ENCODE measurements at regions of chr3 and their contacts with region 1.

Region 1: DNA sequence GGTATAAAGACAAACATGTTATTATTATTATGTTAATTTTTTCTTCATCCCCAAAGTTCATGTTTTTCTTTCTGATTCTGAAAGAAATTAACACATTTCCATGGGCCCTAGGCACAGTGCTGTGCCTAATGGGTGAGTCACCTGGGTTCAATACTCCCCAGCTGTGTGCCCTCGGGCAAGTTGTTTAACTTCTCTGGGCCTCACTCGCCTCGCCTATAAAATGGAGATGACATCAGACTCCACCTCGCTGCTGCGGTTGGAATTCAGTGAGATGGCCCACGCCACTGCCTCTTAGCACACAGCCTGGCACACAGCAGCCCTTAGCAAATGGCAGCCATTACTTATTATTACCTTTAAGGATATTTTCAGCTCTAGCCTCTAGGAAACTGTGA is 22.6 kb downstream of the DNASE1L3 start:
- DNase-seq: peak; percentile 86
- H3K4me3 Mint-ChIP-seq: no peak overlapping the region
- H3K27ac Mint-ChIP-seq: no peak overlapping the region
- H3K4me1 Mint-ChIP-seq: peaks cover 9% of the 10 kb centered on the region
- H3K27me3 Mint-ChIP-seq: no peaks in the 10 kb centered on the region
- CTCF ChIP-seq: no peak

Region 2: DNA sequence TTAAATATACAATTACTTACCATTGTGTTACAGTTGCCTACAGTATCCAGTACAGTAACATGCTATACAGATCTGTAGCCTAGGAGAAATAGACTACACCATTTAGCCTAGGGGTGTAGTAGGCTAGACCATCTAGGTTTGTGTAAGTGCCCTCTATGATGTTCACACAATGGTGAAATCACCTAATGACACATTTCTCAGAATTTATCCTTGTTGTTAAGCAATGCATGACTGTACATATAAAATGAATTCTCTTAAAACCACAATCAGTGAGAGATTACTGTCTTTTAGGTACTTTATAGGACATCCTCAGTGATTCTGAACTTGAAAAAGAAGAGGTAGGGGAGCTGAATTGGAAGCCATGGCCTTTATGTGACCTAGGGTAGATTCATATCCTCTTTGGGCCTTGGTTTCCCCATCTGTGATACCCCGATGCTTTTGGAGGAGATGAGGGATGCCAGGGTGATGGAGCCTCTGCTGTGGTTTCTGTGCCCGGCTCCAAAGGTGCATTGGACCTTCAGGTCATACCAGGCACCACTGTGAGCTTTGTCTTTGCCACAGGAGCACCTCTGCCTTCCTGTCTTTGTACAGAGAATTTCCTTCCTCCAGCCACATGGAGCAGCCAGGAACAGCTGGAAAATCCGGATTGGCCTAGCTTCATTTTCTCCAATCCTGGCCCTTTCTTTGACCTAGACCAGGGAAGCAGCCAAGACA is 231.9 kb before region 1 on chr3:
- CTCF ChIA-PET with region 1: no interaction called
- POLR2A ChIA-PET with region 1: no interaction called
- intact Hi-C with region 1: no loop called
- DNase-seq: peak; percentile 90
- H3K4me3 Mint-ChIP-seq: no peak overlapping the region
- H3K27ac Mint-ChIP-seq: peak overlapping the region; percentile 70
- H3K4me1 Mint-ChIP-seq: peaks cover 25% of the 10 kb centered on the region
- H3K27me3 Mint-ChIP-seq: no peaks in the 10 kb centered on the region
- CTCF ChIP-seq: no peak

Region 3: GRCh38 chr3:58206406-58207011 is 18.3 kb after region 1 on chr3:
- CTCF ChIA-PET with region 1: interaction called, 11 read pairs
- POLR2A ChIA-PET with region 1: interaction called, 5 read pairs
- intact Hi-C with region 1: no loop called
- DNase-seq: peak; percentile 64
- H3K4me3 Mint-ChIP-seq: no peak overlapping the region
- H3K27ac Mint-ChIP-seq: no peak overlapping the region
- H3K4me1 Mint-ChIP-seq: no peaks in the 10 kb centered on the region
- H3K27me3 Mint-ChIP-seq: peaks cover 24% of the 10 kb centered on the region
- CTCF ChIP-seq: no peak

Measured in MCF 10A (cell line).